PC-9 (cell line): ENCODE measurements at regions of chr12 and their contacts with region 1.

Region 1: DNA sequence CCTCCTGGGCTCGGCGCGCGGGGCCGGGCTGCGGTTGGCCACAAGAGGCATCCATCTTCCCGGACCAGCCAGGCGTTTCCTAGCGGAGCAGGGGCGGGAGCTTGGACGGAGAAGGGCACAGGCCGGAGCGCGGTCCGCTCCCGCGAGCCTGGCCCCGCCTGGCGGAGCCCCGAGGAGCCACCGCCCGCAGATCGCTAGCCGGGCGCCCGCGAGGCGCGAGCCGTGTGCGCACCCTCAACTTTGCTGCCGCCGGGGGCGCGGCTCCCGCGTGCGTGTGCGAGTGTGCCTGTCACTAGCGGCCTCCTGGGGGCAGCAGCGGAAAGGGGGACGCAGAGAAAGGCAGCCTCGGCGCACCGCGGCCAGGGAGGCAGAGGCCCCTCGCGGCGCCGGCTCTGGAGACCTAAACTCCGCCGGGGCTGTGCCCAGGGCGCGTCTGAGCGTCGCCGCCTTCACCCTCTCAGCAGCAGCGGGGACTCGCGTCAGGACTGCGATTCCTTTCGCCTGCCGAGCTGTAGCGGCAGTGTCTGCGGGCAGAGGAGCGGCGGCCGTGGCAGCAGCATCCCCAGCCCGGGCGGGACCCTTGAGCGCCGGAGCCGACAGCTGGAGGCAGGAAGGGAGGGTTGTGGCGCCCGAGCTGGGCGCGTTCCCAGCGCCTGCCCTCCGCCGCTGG is 644 bp upstream of the SRGAP1 start:
- DNase-seq: peak; percentile 78 to 91
- H3K4me3 ChIP-seq: peak overlapping the region; percentile 97
- H3K27ac ChIP-seq: peak overlapping the region; percentile 65; the same call in 1 of the 2 replicates
- H3K4me1 ChIP-seq: peaks cover 29% of the 10 kb centered on the region
- H3K27me3 ChIP-seq: no peaks in the 10 kb centered on the region
- CTCF ChIP-seq: peak; percentile 84

Region 2: GRCh38 chr12:63888908-63889635 is 45.2 kb after region 1 on chr12:
- CTCF ChIA-PET with region 1: no interaction called
- POLR2A ChIA-PET with region 1: no interaction called
- intact Hi-C with region 1: no loop called
- DNase-seq: no peak
- H3K4me3 ChIP-seq: no peak overlapping the region
- H3K27ac ChIP-seq: no peak overlapping the region
- H3K4me1 ChIP-seq: no peaks in the 10 kb centered on the region
- H3K27me3 ChIP-seq: no peaks in the 10 kb centered on the region
- CTCF ChIP-seq: no peak

Region 3: DNA sequence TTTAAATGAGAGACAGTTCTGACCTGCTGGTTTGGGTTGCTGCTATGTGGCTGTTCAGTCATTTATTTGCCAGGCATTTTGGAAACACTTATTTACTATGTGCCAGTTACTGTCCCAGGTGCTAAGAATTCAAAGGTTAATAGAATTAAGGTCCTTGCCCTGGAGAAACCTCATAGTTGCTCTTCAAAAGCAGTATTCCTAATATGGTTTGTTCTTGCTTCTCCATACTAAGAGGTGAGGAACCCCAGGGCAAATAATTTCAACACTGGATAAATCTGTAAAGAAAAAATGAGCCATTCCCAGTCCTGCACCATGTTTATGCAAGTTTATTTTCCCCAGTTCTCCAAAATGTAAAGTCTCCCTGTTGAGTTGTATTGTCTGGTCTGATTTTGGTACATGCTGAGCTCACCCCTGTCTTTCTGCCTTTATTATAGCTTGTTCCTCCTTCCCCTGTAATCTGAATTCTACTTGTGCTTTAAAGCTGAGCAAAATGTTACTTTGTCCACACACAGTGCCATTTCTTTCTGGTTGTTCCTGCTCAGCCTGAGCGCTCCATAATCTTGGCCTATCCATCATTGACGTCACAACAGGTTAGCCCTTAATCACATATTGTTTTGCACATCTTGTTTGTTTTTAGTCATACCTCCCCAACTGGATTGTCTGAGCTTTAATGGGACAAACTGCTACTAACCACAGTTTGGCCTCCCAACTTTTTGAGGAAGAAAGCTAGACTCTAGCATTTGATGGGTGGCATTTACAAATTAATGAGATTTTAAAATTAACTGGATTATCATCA is 57.3 kb after region 1 on chr12:
- CTCF ChIA-PET with region 1: no interaction called
- POLR2A ChIA-PET with region 1: no interaction called
- intact Hi-C with region 1: loop called (anchors 5 kb)
- DNase-seq: peak in 1 of 2 experiments; percentile 92
- H3K4me3 ChIP-seq: peak overlapping the region; percentile 9; the same call in 1 of the 2 replicates
- H3K27ac ChIP-seq: peak overlapping the region; percentile 81
- H3K4me1 ChIP-seq: peaks cover 77% of the 10 kb centered on the region
- H3K27me3 ChIP-seq: no peaks in the 10 kb centered on the region
- CTCF ChIP-seq: no peak

Region 4: GRCh38 chr12:63940310-63941005 is 96.6 kb after region 1 on chr12:
- CTCF ChIA-PET with region 1: no interaction called
- POLR2A ChIA-PET with region 1: interaction called, 10 read pairs
- intact Hi-C with region 1: loop called (anchors 5 kb)
- DNase-seq: no peak
- H3K4me3 ChIP-seq: no peak overlapping the region
- H3K27ac ChIP-seq: no peak overlapping the region
- H3K4me1 ChIP-seq: no peaks in the 10 kb centered on the region
- H3K27me3 ChIP-seq: no peaks in the 10 kb centered on the region
- CTCF ChIP-seq: no peak

Region 5: GRCh38 chr12:64088431-64089349 is 244.8 kb after region 1 on chr12:
- CTCF ChIA-PET with region 1: no interaction called
- POLR2A ChIA-PET with region 1: no interaction called
- intact Hi-C with region 1: loop called (anchors 5 kb)
- DNase-seq: peak; percentile 71 to 94
- H3K4me3 ChIP-seq: peak overlapping the region; percentile 48; the same call in 1 of the 2 replicates
- H3K27ac ChIP-seq: peak overlapping the region; percentile 89
- H3K4me1 ChIP-seq: peaks cover 40% of the 10 kb centered on the region
- H3K27me3 ChIP-seq: no peaks in the 10 kb centered on the region
- CTCF ChIP-seq: no peak

Region 6: GRCh38 chr12:64181504-64182291 is 337.8 kb after region 1 on chr12:
- CTCF ChIA-PET with region 1: interaction called, 8 read pairs
- POLR2A ChIA-PET with region 1: no interaction called
- intact Hi-C with region 1: loop called (anchors 1 kb)
- DNase-seq: peak; percentile 58 to 96
- H3K4me3 ChIP-seq: peak overlapping the region; percentile 3; the same call in 1 of the 2 replicates
- H3K27ac ChIP-seq: peak overlapping the region; percentile 79
- H3K4me1 ChIP-seq: peaks cover 50% of the 10 kb centered on the region
- H3K27me3 ChIP-seq: no peaks in the 10 kb centered on the region
- CTCF ChIP-seq: peak; percentile 51; the same call in 1 of the 2 replicates

Region 7: DNA sequence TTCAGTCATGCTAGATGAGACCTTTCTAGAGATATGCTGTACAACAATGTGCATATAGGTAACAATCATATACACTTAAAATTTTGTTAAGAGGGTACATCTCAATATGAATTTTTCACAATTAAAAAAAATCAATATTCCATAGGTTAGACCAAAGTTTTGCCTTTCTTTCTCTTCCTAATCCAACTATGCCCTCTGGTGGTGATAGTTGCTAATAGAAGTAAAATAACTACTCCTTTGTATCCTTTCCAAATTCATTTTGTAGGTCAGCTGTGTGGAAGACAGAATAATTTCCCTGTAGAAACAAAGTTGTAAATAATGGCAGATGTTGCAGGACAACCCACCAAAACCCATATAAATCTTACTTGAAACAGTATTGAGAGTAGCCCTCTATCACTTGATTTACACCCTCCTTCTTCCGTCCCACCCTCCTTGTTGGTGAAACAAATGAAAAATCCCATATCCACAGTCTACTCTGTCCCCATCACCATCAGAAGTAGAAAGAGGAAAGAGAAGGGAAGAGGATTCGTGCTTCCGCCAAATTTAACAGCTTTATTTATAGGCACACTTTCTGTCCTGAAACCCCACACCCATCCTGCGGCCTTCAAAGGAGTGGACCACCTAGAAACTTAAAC is 412.4 kb after region 1 on chr12:
- CTCF ChIA-PET with region 1: interaction called, 3 read pairs
- POLR2A ChIA-PET with region 1: no interaction called
- intact Hi-C with region 1: loop called (anchors 1 kb)
- DNase-seq: no peak
- H3K4me3 ChIP-seq: no peak overlapping the region
- H3K27ac ChIP-seq: no peak overlapping the region
- H3K4me1 ChIP-seq: no peaks in the 10 kb centered on the region
- H3K27me3 ChIP-seq: no peaks in the 10 kb centered on the region
- CTCF ChIP-seq: peak; percentile 88